Tibial artery (tissue), 4 donors: ENCODE measurements at regions of chr3 and their contacts with region 1.

Region 1: GRCh38 chr3:183641882-183642281 is 6.5 kb downstream of the KLHL24 start:
- DNase-seq: no peak
- H3K4me3 ChIP-seq: no peak overlapping the region
- H3K27ac ChIP-seq: no peak overlapping the region
- H3K4me1 ChIP-seq: peaks cover 0 to 61% (median 15%) of the 10 kb centered on the region in 4 donors
- H3K27me3 ChIP-seq: no peaks in the 10 kb centered on the region
- CTCF ChIP-seq: no peak

Region 2: GRCh38 chr3:182436547-182436946 is 1205.3 kb before region 1 on chr3:
- intact Hi-C with region 1: no loop called
- DNase-seq: no peak
- H3K4me3 ChIP-seq: no peak overlapping the region
- H3K27ac ChIP-seq: no peak overlapping the region
- H3K4me1 ChIP-seq: no peaks in the 10 kb centered on the region
- H3K27me3 ChIP-seq: no peaks in the 10 kb centered on the region
- CTCF ChIP-seq: no peak

Region 3: GRCh38 chr3:184428561-184429175 is 786.8 kb after region 1 on chr3:
- intact Hi-C with region 1: loop called (anchors 5 kb)
- DNase-seq: peak in 1 of 2 donors; percentile 29
- H3K4me3 ChIP-seq: no peak overlapping the region
- H3K27ac ChIP-seq: no peak overlapping the region
- H3K4me1 ChIP-seq: peaks cover 0 to 10% (median 4%) of the 10 kb centered on the region in 4 donors
- H3K27me3 ChIP-seq: no peaks in the 10 kb centered on the region
- CTCF ChIP-seq: no peak

Region 4: DNA sequence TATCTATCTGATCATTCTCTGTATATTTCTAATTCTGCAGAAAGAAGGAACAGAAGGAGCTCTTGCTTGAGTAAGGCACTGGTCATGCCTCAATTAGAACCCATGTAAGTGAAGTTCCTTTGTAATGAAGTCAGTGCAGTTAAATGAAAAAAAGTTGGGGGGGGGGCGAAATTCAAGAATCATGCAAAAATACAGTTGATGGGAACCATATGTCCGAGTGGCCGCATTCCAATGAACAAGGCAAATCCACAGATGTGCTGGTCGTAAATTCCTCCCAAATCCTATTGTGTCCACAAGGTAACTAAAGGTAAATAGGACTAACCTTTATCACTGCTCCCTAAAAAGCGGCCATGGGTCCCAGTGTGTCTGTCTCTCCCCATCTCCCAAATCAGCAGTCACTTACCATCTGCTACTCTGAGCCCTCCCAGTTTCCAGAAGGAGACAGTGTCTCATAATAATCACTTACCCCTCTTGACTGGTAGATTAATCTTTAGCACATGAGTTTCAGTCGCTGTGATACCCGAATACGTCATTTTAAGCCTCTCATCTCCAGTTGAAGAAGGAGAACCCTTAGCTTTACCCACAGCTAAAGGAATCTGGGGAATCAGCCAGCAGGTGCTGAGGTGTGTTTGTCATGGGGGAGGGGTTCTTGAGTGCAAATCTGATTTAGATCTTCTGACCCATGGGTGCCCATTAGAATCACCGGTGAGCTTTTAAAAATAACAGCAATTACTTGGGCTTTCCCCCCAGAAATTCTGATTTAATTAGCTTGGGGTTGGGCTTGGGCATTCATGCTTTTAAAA is 863.4 kb after region 1 on chr3:
- intact Hi-C with region 1: no loop called
- DNase-seq: no peak
- H3K4me3 ChIP-seq: no peak overlapping the region
- H3K27ac ChIP-seq: no peak overlapping the region
- H3K4me1 ChIP-seq: no peaks in the 10 kb centered on the region
- H3K27me3 ChIP-seq: peaks cover 0 to 46% of the 10 kb centered on the region in 2 donors
- CTCF ChIP-seq: no peak